ENCODE measurements at regions of chr4 and their contacts with region 1.

Region 1: DNA sequence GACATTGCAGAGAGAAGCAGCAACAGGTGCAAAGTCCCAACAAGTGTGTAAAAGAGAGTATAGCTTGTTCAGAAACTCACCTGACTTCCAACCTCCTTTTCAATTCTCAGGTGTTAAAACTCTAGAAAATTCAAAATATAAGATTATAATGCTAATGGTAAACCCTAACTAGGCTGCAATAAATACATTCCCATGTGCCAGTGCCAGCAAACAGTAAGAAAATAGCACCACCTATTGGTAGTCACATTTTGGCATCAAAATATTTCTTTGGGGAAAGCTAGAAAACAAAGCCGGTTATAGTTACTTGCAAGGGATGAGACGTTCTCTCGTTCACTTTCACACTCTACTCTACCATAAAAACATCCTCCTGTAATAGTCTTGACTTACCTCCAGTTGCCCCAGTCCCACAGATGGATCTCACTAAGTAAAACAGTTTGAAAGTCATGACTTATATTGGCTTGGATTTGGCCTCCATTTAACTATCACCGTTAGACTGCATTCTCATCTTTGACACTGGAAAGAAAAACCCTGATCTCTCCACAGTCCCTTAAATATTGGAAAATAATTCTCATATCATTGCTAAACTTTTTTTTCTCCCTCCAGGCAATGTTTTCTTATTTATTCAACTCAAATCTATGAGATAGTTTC is 9.6 kb downstream of the BMP3 start:
- DNase-seq: peak; percentile 16
- H3K4me3 ChIP-seq: no peak overlapping the region
- H3K27ac ChIP-seq: no peak overlapping the region
- H3K4me1 ChIP-seq: peaks cover 3% of the 10 kb centered on the region
- H3K27me3 ChIP-seq: peaks cover 6% of the 10 kb centered on the region
- CTCF ChIP-seq: peak; percentile 72 to 78

Region 2: DNA sequence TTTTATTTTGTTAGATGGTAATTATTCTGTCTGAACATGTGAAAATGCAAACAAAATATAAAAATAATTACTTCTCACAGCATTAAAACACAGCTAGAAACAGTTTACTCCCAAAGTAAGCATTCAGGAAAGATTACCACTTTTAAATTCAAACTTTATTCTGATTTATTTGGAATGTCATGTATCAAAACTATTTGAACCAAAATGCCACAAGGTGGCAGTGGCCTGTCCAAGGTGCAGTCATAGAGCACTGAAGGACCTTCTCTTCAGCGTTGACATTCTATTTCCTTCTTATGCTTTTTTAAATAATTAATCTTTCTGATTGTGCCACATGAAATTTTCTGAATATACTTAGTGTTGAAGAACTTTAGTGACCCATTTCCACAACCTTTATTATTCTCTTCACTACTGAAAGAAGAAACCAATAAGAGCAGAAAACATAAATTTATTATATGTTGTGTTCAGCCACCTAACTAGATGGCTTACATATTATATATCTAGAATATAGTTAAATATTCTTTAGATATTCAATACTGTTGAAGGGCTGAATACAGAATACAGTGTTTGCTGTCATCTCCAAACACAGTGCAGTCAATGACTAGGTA is 421.0 kb before region 1 on chr4:
- CTCF ChIA-PET with region 1: no interaction called
- dilution Hi-C with region 1: no loop called
- in situ Hi-C with region 1: no loop called
- intact Hi-C with region 1: loop called (anchors 1 kb)
- DNase-seq: peak; percentile 1
- H3K4me3 ChIP-seq: no peak overlapping the region
- H3K27ac ChIP-seq: no peak overlapping the region
- H3K4me1 ChIP-seq: no peaks in the 10 kb centered on the region
- H3K27me3 ChIP-seq: peaks cover 4% of the 10 kb centered on the region
- CTCF ChIP-seq: peak; percentile 22 to 59

Region 3: GRCh38 chr4:81237791-81238190 is 197.7 kb after region 1 on chr4:
- CTCF ChIA-PET with region 1: no interaction called
- dilution Hi-C with region 1: no loop called
- in situ Hi-C with region 1: no loop called
- intact Hi-C with region 1: no loop called
- DNase-seq: peak; percentile 58
- H3K4me3 ChIP-seq: no peak overlapping the region
- H3K27ac ChIP-seq: no peak overlapping the region
- H3K4me1 ChIP-seq: peaks cover 6% of the 10 kb centered on the region
- H3K27me3 ChIP-seq: no peaks in the 10 kb centered on the region
- CTCF ChIP-seq: no peak

Measured in mammary epithelial cell (primary cell).